Posterior vena cava (tissue), 2 donors: ENCODE measurements at regions of chr10 and their contacts with region 1.

Region 1: GRCh38 chr10:283916-284356 is 148.7 kb downstream of the ZMYND11 start:
- DNase-seq: no peak

Region 2: GRCh38 chr10:329361-330099 is 45.6 kb after region 1 on chr10:
- intact Hi-C with region 1: no loop called
- DNase-seq: peak; percentile 94

Region 3: DNA sequence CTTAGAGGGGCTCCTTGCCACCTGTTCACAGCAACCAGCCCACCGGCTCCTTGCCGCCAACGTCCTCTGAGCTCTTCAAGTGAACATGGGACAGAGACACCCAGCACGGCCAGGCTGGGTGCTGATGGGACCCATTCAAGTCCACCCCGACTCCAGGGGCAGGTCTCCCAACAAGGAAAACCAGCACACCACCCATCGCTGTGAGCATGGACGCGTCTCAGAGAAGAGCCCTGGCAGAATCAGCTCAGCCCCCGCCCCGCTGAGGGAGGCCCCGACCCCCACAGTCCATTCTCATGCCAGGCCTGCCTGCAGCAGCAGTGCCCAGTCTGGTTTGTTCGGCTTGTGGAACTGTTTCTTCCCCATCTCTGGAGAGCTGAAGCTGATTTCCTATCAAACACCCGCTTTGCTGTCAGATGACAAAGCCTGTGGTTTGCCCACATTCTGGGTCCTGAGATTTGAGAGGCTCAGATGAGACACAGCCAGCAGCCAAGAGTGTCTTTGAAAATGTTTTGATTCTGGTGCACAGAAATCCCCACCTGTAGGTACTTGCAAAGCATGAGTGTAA is 67.9 kb after region 1 on chr10:
- intact Hi-C with region 1: loop called in 1 of 2 experiments (anchors 5 kb)
- DNase-seq: no peak